ENCODE measurements at regions of chr15 and their contacts with region 1.

Region 1: GRCh38 chr15:68352401-68353062 is 75.0 kb downstream of the FEM1B start:
- DNase-seq: peak; percentile 53 to 89
- ATAC-seq: peak; percentile 83 to 86
- H3K4me3 ChIP-seq: no peak overlapping the region
- H3K27ac ChIP-seq: peak overlapping the region; percentile 75 to 84
- H3K4me1 ChIP-seq: peaks cover 42% of the 10 kb centered on the region
- CTCF ChIP-seq: no peak
- EP300 ChIP-seq: peak; percentile 58 to 65; a peak in 2 of 5 replicates
- POLR2A ChIP-seq: no peak
- RAD21 ChIP-seq: peak in 1 of 2 experiments; percentile 43; a peak in 2 of 5 replicates

Region 2: GRCh38 chr15:68341760-68342725 is 10.5 kb before region 1 on chr15:
- CTCF ChIA-PET with region 1: interaction called, 17 read pairs
- POLR2A ChIA-PET with region 1: no interaction called
- DNase-seq: no peak
- ATAC-seq: peak in 1 of 2 experiments; percentile 12; a peak in 2 of 6 replicates
- H3K4me3 ChIP-seq: no peak overlapping the region
- H3K27ac ChIP-seq: peak overlapping the region; percentile 10 to 11; a peak in 2 of 6 replicates
- H3K4me1 ChIP-seq: peaks cover 11% of the 10 kb centered on the region; the same call in 1 of the 3 replicates
- CTCF ChIP-seq: no peak
- EP300 ChIP-seq: no peak
- POLR2A ChIP-seq: no peak
- RAD21 ChIP-seq: no peak

Measured in A549 (cell line).